A673 (cell line): ENCODE measurements at regions of chr13 and their contacts with region 1.

Region 1: DNA sequence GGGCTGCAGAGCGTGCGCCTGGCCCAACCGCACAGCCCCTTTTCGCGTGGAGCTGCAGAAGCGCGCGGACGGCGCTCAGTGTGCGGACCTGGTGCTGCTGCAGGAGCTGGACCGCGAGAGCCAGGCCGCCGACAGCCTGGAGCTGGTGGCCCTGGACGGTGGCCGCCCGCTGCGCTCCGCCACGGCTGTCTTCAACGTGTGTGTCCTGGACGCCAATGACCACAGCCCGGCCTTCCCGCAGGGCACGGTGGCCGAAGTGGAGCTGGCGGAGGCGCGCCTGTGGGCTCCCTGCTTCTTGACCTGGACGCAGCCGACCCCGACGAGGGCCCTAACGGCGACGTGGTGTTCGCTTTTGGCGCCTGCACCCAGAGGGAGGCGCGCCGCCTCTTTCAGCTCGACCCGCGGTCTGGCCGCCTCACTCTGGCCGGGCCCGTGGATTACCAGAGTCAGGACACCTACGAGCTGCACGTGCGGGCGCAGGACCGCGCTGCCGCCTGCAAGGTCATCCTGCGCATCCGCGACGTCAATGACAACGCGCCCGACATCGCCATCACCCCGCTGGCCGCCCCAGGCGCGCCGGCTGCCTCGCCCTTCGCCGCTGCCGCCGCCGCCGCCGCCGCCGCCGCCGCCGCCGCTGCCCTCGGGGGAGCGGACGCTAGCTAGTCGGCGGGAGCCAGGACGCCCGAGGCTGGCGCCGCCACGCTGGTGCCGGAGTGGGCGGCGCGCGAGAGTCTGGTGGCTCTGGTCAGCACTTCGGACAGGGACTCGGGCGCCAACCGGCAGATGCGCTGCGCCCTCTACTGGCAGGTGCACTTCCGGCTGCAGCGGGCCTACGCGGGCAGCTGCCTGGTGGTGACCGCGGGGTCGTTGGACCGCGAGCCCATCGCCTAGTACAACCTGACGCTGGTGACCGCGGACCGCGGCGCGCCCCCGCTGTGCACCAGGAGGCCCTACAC is 172.2 kb downstream of the OLFM4 start:
- DNase-seq: peak; percentile 61
- H3K4me3 ChIP-seq: no peak overlapping the region
- H3K27ac ChIP-seq: no peak overlapping the region
- H3K4me1 ChIP-seq: no peaks in the 10 kb centered on the region
- H3K27me3 ChIP-seq: no peaks in the 10 kb centered on the region
- CTCF ChIP-seq: peak; percentile 75

Region 2: DNA sequence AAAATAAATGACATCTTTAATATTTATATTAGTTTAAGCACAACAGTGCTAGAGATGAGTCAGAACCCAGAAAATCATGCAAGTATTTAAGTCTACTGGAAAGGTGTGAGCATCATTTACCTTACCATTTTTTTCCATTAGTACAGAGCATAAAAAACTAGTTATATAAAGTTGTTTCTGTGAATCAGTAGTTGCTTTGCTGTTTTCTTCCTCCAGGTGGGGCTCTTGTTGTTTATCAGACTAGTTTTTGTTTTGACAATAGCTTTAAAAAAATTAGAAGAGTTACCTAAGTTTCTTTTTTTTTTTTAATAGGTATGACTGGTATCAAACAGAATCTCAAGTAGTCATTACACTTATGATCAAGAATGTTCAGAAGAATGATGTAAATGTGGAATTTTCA is 535.5 kb before region 1 on chr13:
- CTCF ChIA-PET with region 1: interaction called, 4 read pairs
- POLR2A ChIA-PET with region 1: no interaction called
- intact Hi-C with region 1: loop called (anchors 10 kb)
- DNase-seq: peak; percentile 34
- H3K4me3 ChIP-seq: no peak overlapping the region
- H3K27ac ChIP-seq: no peak overlapping the region
- H3K4me1 ChIP-seq: peaks cover 6% of the 10 kb centered on the region
- H3K27me3 ChIP-seq: no peaks in the 10 kb centered on the region
- CTCF ChIP-seq: peak; percentile 64

Region 3: GRCh38 chr13:52846567-52847321 is 354.0 kb before region 1 on chr13:
- CTCF ChIA-PET with region 1: interaction called, 3 read pairs
- POLR2A ChIA-PET with region 1: no interaction called
- intact Hi-C with region 1: loop called (anchors 5 kb)
- DNase-seq: peak; percentile 74
- H3K4me3 ChIP-seq: peak overlapping the region; percentile 28
- H3K27ac ChIP-seq: no peak overlapping the region
- H3K4me1 ChIP-seq: peaks cover 38% of the 10 kb centered on the region
- H3K27me3 ChIP-seq: peaks cover 71% of the 10 kb centered on the region
- CTCF ChIP-seq: peak; percentile 66